HEK293 (cell line): ENCODE measurements at regions of chr5 and their contacts with region 1.

Region 1: GRCh38 chr5:142012792-142013388 is at the start of gene GNPDA1:
- H3K4me3 ChIP-seq: peak within 1 kb of the TSS; percentile 62
- H3K27ac ChIP-seq: peak within 1 kb of the TSS; percentile 49; the same call in 1 of the 2 replicates
- H3K4me1 ChIP-seq: no peaks in the 10 kb centered on the region
- CTCF ChIP-seq: 0 out of 2 replicates have a peak, but pooled peaks have one; percentile 7

Region 2: GRCh38 chr5:142000703-142001484 is 12.0 kb before region 1 on chr5:
- CTCF ChIA-PET with region 1: interaction called, 43 read pairs
- POLR2A ChIA-PET with region 1: interaction called, 3 read pairs
- H3K4me3 ChIP-seq: no peak overlapping the region
- H3K27ac ChIP-seq: no peak overlapping the region
- H3K4me1 ChIP-seq: no peaks in the 10 kb centered on the region
- CTCF ChIP-seq: 0 out of 2 replicates have a peak, but pooled peaks have one; percentile 20

Region 3: DNA sequence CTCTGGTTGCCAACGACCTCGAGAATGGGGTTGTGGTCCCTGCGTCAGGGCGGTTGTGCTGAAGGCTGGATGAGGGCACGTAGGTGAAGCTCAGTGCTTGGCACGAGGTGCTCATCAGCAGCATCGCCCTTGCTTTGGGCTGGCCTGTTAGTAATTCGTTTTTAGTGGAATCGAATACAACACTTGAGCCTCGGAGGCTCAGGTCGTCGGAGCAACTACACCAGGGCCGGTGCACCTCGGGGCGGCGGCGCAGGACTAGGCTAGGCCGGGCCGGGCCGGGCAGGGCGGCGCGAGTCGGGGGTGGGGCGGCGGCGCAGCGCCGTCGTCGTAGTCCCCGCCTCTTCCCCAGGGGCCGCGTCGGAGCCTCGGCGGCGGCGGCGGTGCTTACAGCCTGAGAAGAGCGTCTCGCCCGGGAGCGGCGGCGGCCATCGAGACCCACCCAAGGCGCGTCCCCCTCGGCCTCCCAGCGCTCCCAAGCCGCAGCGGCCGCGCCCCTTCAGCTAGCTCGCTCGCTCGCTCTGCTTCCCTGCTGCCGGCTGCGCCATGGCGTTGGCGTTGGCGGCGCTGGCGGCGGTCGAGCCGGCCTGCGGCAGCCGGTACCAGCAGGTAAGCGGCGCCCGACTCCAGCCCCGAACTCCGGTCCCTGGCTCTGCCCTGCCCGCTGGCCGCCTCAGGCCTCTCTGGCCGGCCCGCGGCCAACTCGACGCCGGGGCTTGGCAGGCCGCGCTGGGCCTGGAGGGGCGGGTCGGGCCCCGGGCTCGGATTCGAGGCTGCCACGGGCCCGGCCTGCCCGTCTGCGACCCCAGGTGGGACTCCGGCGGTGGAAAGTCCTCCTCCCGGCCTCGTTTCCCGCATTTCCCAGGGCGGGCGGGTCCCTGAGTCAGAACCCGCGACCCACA is 95.8 kb after region 1 on chr5 and contains the start of gene NDFIP1:
- CTCF ChIA-PET with region 1: interaction called, 4 read pairs
- POLR2A ChIA-PET with region 1: interaction called, 11 read pairs
- H3K4me3 ChIP-seq: peak within 1 kb of the TSS; percentile 85
- H3K27ac ChIP-seq: peak within 1 kb of the TSS; percentile 93
- H3K4me1 ChIP-seq: 0 out of 2 replicates have a peak, but pooled peaks cover 2% of the 10 kb centered on the region
- CTCF ChIP-seq: peak; percentile 28; the same call in 1 of the 2 replicates

Region 4: GRCh38 chr5:142145106-142145900 is 132.4 kb after region 1 on chr5:
- CTCF ChIA-PET with region 1: interaction called, 23 read pairs
- POLR2A ChIA-PET with region 1: no interaction called
- H3K4me3 ChIP-seq: no peak overlapping the region
- H3K27ac ChIP-seq: no peak overlapping the region
- H3K4me1 ChIP-seq: no peaks in the 10 kb centered on the region
- CTCF ChIP-seq: no peak